ENCODE measurements at regions of chr6 and their contacts with region 1.

Region 1: GRCh38 chr6:99119109-99120031 is 171.6 kb upstream of the FBXL4 start:
- DNase-seq: peak; percentile 35
- ATAC-seq: peak; percentile 53
- H3K4me3 Mint-ChIP-seq: no peak overlapping the region
- H3K27ac Mint-ChIP-seq: no peak overlapping the region
- H3K4me1 Mint-ChIP-seq: peaks cover 2% of the 10 kb centered on the region
- H3K27me3 Mint-ChIP-seq: peaks cover 19% of the 10 kb centered on the region

Region 2: DNA sequence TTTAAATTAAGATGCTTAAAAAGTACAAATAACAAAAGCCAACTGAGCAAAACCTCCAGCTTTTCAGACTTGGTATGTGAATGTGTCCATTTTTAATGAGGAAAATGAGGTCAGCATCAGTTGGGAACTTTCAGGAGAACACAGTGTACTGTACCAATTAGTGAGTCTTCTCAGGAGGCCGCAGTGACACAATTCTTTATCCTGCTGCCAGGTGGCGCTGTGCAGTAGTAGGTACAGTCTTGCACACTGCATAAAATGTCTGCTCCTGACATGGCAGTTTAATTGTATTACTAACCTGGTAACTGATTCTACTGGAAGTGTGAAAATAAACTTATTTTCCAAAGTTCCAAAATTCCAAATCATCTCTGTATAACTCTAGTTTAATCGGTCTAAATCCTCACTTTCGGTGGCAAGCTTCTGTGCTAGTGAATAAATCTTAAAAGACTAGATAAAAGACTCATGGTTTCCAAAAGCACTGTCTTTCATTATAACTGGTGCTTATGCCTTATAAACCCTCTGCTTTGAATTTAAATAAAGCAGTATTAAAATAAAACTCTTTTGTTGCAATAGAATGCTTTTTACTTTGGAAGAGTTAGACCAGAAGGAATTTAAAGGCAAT is 1621.5 kb before region 1 on chr6:
- CTCF ChIA-PET with region 1: interaction called, 6 read pairs
- POLR2A ChIA-PET with region 1: no interaction called
- intact Hi-C with region 1: loop called (anchors 1 kb)
- DNase-seq: peak; percentile 76
- ATAC-seq: peak; percentile 91
- H3K4me3 Mint-ChIP-seq: no peak overlapping the region
- H3K27ac Mint-ChIP-seq: no peak overlapping the region
- H3K4me1 Mint-ChIP-seq: no peaks in the 10 kb centered on the region
- H3K27me3 Mint-ChIP-seq: peaks cover 6% of the 10 kb centered on the region

Region 3: DNA sequence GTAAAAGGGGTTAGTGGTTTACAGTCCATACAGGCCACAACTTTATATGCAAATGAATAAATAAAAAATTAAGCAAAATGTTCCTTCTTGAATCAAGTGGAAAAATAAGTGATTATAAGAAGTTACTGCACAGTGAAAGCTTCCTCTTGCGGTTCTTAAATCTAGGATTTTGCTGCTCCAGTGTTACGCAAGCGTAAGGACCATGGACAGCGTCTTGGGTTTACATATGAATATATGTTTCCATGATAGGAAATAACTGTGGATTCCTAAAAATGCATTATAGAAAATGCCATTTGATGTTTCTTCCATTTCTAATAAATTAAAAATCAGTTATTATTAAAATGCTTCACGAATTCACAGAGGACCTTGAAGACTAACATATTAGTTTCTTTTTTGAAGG is 461.6 kb before region 1 on chr6:
- CTCF ChIA-PET with region 1: no interaction called
- POLR2A ChIA-PET with region 1: no interaction called
- intact Hi-C with region 1: no loop called
- DNase-seq: peak; percentile 37
- ATAC-seq: no peak
- H3K4me3 Mint-ChIP-seq: no peak overlapping the region
- H3K27ac Mint-ChIP-seq: no peak overlapping the region
- H3K4me1 Mint-ChIP-seq: no peaks in the 10 kb centered on the region
- H3K27me3 Mint-ChIP-seq: peaks cover 5% of the 10 kb centered on the region

Region 4: GRCh38 chr6:98769544-98769943 is 349.8 kb before region 1 on chr6:
- CTCF ChIA-PET with region 1: interaction called, 5 read pairs
- POLR2A ChIA-PET with region 1: no interaction called
- intact Hi-C with region 1: loop called (anchors 2 to 10 kb)
- DNase-seq: peak; percentile 48
- ATAC-seq: no peak
- H3K4me3 Mint-ChIP-seq: no peak overlapping the region
- H3K27ac Mint-ChIP-seq: no peak overlapping the region
- H3K4me1 Mint-ChIP-seq: peaks cover under 1% of the 10 kb centered on the region
- H3K27me3 Mint-ChIP-seq: peaks cover 24% of the 10 kb centered on the region

Region 5: GRCh38 chr6:99136488-99136887 is 17.1 kb after region 1 on chr6:
- CTCF ChIA-PET with region 1: no interaction called
- POLR2A ChIA-PET with region 1: no interaction called
- intact Hi-C with region 1: no loop called
- DNase-seq: no peak
- ATAC-seq: no peak
- H3K4me3 Mint-ChIP-seq: no peak overlapping the region
- H3K27ac Mint-ChIP-seq: no peak overlapping the region
- H3K4me1 Mint-ChIP-seq: no peaks in the 10 kb centered on the region
- H3K27me3 Mint-ChIP-seq: peaks cover 4% of the 10 kb centered on the region

Measured in activated CD4-positive, alpha-beta T cell treated with anti-CD3 and anti-CD28 coated beads for 36 hours (primary cell).